ENCODE measurements at regions of chr5 and their contacts with region 1.

Region 1: DNA sequence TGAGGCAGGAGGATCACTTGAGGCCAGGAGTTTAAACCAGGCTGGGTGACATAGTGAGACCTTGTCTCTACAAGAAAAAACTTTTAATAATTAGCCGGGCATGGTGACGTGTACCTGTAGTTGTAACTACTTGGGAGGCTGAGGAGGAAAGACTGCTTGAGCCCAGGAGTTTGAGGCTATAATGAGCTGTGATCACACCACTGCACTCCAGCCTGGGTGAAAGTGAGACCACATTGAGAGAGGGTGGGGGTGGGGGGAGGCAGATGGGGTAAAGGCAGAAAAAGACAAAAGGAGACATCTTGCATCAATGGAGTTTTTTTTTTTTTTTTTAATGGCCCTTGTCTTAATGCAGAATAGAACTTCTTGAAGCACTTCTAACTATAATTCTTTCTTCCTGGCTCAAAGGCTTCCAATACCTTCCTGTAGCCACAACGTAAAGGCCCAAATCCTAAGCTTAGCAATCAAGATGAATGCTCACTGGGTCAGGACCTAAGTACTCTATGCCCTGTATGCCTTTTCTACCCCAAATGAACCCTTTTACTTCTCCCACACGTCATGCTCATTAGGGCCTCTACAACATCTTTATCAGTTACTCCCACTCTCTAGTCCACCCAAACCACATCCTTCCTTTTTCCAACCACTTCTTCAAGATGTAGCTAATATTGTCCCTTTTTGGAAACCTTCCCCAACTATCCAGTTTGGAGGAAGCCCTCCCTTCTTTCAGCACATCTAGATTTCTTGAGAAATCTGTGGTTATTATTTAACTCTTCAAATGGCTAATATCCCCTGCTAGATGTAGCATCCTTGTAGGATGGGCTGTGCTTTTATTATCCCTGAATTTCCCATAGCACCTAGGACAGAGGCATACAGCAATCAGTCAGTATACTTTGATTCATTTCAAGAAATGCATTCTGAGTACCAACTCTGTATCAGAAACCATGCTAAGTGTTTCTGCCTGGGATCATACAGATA is 40.8 kb downstream of the CSF2 start:
- DNase-seq: peak in 3 of 4 experiments; percentile 33 to 81 (median 72)
- ATAC-seq: peak; percentile 87
- H3K4me3 ChIP-seq: no peak overlapping the region
- H3K27ac ChIP-seq: peak overlapping the region; percentile 56
- H3K4me1 ChIP-seq: peaks cover 22 to 30% of the 10 kb centered on the region in 2 experiments
- H3K27me3 ChIP-seq: no peaks in the 10 kb centered on the region
- CTCF ChIP-seq: no peak
- EP300 ChIP-seq: peak; percentile 97
- POLR2A ChIP-seq: no peak
- RAD21 ChIP-seq: peak in 1 of 2 experiments; percentile 42; a peak in 2 of 4 replicates

Region 2: DNA sequence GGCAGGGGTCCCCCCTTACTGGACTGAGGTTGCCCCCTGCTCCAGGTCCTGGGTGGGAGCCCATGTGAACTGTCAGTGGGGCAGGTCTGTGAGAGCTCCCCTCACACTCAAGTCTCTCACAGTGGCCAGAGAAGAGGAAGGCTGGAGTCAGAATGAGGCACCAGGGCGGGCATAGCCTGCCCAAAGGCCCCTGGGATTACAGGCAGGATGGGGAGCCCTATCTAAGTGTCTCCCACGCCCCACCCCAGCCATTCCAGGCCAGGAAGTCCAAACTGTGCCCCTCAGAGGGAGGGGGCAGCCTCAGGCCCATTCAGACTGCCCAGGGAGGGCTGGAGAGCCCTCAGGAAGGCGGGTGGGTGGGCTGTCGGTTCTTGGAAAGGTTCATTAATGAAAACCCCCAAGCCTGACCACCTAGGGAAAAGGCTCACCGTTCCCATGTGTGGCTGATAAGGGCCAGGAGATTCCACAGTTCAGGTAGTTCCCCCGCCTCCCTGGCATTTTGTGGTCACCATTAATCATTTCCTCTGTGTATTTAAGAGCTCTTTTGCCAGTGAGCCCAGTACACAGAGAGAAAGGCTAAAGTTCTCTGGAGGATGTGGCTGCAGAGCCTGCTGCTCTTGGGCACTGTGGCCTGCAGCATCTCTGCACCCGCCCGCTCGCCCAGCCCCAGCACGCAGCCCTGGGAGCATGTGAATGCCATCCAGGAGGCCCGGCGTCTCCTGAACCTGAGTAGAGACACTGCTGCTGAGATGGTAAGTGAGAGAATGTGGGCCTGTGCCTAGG is 41.0 kb before region 1 on chr5 and contains the start of gene CSF2:
- CTCF ChIA-PET with region 1: no interaction called
- POLR2A ChIA-PET with region 1: no interaction called
- in situ Hi-C with region 1: no loop called
- intact Hi-C with region 1: loop called (anchors 5 kb)
- DNase-seq: no peak
- ATAC-seq: no peak
- H3K4me3 ChIP-seq: no peak within 1 kb of the TSS
- H3K27ac ChIP-seq: no peak within 1 kb of the TSS
- H3K4me1 ChIP-seq: peaks cover 28 to 58% of the 10 kb centered on the region in 2 experiments
- H3K27me3 ChIP-seq: no peaks in the 10 kb centered on the region
- CTCF ChIP-seq: no peak
- EP300 ChIP-seq: no peak
- POLR2A ChIP-seq: no peak
- RAD21 ChIP-seq: no peak
- polyA plus RNA-seq, gene CSF2: not detected